Activated CD4-positive, alpha-beta memory T cell treated with anti-CD3 and anti-CD28 coated beads for 36 hours (primary cell): ENCODE measurements at regions of chr12 and their contacts with region 1.

Region 1: GRCh38 chr12:21539797-21540196 is 13.7 kb downstream of the SPX start:
- DNase-seq: no peak
- H3K4me3 Mint-ChIP-seq: no peak overlapping the region
- H3K27ac Mint-ChIP-seq: no peak overlapping the region
- H3K4me1 Mint-ChIP-seq: peaks cover 10% of the 10 kb centered on the region
- H3K27me3 Mint-ChIP-seq: peaks cover 2% of the 10 kb centered on the region

Region 2: DNA sequence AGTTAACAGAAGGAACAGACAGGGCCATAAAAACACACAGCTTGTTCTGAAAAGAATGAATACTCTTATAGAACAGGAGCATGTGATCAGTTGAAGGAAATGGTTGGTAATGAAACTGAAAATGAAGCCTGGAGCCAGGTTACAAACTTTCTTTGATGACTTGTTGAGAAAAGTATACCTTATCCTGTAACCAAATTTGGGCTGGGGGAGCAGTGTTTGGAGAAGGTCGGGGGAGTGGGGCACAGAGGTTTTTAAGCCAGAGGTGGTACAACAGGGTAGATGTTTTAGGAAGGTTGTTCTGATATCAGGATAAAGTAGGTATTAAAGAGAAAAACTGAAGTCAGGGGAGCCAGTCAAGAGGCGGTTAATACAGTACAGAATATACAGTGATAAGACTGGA is 30.0 kb before region 1 on chr12:
- CTCF ChIA-PET with region 1: no interaction called
- POLR2A ChIA-PET with region 1: no interaction called
- intact Hi-C with region 1: no loop called
- DNase-seq: no peak
- H3K4me3 Mint-ChIP-seq: no peak overlapping the region
- H3K27ac Mint-ChIP-seq: peak overlapping the region; percentile 53
- H3K4me1 Mint-ChIP-seq: peaks cover 34% of the 10 kb centered on the region
- H3K27me3 Mint-ChIP-seq: no peaks in the 10 kb centered on the region

Region 3: DNA sequence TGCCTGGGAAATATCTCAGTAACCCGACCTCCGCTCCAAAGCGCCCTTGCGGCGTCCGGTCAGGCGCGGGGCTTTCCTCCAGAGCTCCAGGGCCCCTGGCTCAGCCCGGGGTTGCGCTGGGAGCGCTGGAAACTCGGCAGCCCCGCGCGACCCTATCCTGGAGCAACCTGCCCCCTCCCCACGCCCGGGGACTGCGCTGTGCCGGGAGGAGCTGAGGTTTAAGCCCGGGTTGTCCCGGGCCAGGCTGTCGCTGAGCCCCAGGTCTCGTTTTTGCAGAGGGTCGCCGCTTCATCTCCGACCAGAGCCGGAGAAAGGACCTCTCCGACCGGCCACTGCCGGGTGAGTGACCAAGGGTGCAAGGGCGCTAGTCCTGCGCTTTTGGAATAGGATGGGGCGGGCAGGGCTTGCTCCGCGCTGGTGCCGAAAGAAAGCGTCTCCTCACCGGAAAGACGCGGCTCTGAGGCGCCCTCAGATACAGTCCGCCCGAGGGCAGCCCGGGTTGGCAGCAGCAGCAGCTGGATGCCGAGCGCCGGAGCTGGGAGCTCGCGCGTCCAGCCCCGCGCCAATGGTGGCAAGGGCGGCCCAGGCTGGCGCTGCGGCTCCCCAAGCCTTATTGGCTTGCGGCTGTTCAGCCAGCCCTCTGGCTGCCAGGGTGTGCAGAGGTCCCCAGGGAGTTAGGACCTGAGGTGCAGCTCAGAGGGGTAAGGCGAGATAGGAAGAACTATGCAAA is 12.2 kb before region 1 on chr12:
- CTCF ChIA-PET with region 1: interaction called, 3 read pairs
- POLR2A ChIA-PET with region 1: interaction called, 5 read pairs
- intact Hi-C with region 1: loop called (anchors 1 kb)
- DNase-seq: peak; percentile 78
- H3K4me3 Mint-ChIP-seq: peak overlapping the region; percentile 73
- H3K27ac Mint-ChIP-seq: no peak overlapping the region
- H3K4me1 Mint-ChIP-seq: peaks cover 6% of the 10 kb centered on the region
- H3K27me3 Mint-ChIP-seq: peaks cover 27% of the 10 kb centered on the region

Region 4: GRCh38 chr12:21559855-21560569 is 20.2 kb after region 1 on chr12:
- CTCF ChIA-PET with region 1: interaction called, 3 read pairs
- POLR2A ChIA-PET with region 1: no interaction called
- intact Hi-C with region 1: loop called (anchors 1 kb)
- DNase-seq: no peak
- H3K4me3 Mint-ChIP-seq: no peak overlapping the region
- H3K27ac Mint-ChIP-seq: peak overlapping the region; percentile 82
- H3K4me1 Mint-ChIP-seq: peaks cover 11% of the 10 kb centered on the region
- H3K27me3 Mint-ChIP-seq: no peaks in the 10 kb centered on the region

Region 5: GRCh38 chr12:22046090-22046967 is 506.5 kb after region 1 on chr12 and contains the start of gene CMAS:
- CTCF ChIA-PET with region 1: no interaction called
- POLR2A ChIA-PET with region 1: no interaction called
- intact Hi-C with region 1: no loop called
- DNase-seq: peak; percentile 87
- H3K4me3 Mint-ChIP-seq: peak within 1 kb of the TSS; percentile 96
- H3K27ac Mint-ChIP-seq: peak within 1 kb of the TSS; percentile 89
- H3K4me1 Mint-ChIP-seq: peaks cover 51% of the 10 kb centered on the region
- H3K27me3 Mint-ChIP-seq: no peaks in the 10 kb centered on the region
- total RNA-seq, gene CMAS: 51.1 to 51.2 TPM